ENCODE measurements at regions of chrX and their contacts with region 1.

Region 1: GRCh38 chrX:132219343-132219768 is at the start of gene RAP2C:
- DNase-seq: peak; percentile 77
- ATAC-seq: peak; percentile 75
- H3K4me3 ChIP-seq: peak within 1 kb of the TSS; percentile 76 to 81 (median 77)
- H3K27ac ChIP-seq: peak within 1 kb of the TSS; percentile 69
- H3K4me1 ChIP-seq: peaks cover 15% of the 10 kb centered on the region; the same call in 1 of the 2 replicates
- H3K27me3 ChIP-seq: no peaks in the 10 kb centered on the region; a peak in 1 of 5 replicates
- CTCF ChIP-seq: peak; percentile 85
- EP300 ChIP-seq: no peak
- POLR2A ChIP-seq: peak in 1 of 2 experiments; percentile 49; a peak in 1 of 4 replicates
- RAD21 ChIP-seq: no peak; the same call in 1 of the 2 replicates
- total RNA-seq, gene RAP2C: 28.5 and 39.3 TPM in 2 replicates

Region 2: GRCh38 chrX:131830400-131831184 is 388.8 kb before region 1 on chrX:
- CTCF ChIA-PET with region 1: no interaction called
- POLR2A ChIA-PET with region 1: interaction called, 4 read pairs
- in situ Hi-C with region 1: loop called (anchors 10 kb)
- intact Hi-C with region 1: no loop called
- DNase-seq: peak; percentile 92
- ATAC-seq: peak; percentile 99
- H3K4me3 ChIP-seq: peak overlapping the region; percentile 52 to 77 (median 64)
- H3K27ac ChIP-seq: peak overlapping the region; percentile 81
- H3K4me1 ChIP-seq: peaks cover 36% of the 10 kb centered on the region
- H3K27me3 ChIP-seq: no peaks in the 10 kb centered on the region
- CTCF ChIP-seq: peak; percentile 72
- EP300 ChIP-seq: 0 out of 4 replicates have a peak, but pooled peaks of 1 of the 2 experiments have one; percentile 6
- POLR2A ChIP-seq: peak; percentile 64 to 67; a peak in 3 of 4 replicates
- RAD21 ChIP-seq: peak; percentile 57; the same call in 1 of the 2 replicates

Region 3: GRCh38 chrX:131841496-131842410 is 377.6 kb before region 1 on chrX:
- CTCF ChIA-PET with region 1: no interaction called
- POLR2A ChIA-PET with region 1: no interaction called
- in situ Hi-C with region 1: loop called (anchors 10 kb)
- intact Hi-C with region 1: loop called (anchors 1 kb)
- DNase-seq: peak; percentile 50
- ATAC-seq: peak; percentile 94
- H3K4me3 ChIP-seq: peak overlapping the region in 1 of 3 experiments; percentile 44; a peak in 1 of 6 replicates
- H3K27ac ChIP-seq: no peak overlapping the region
- H3K4me1 ChIP-seq: 0 out of 2 replicates have a peak, but pooled peaks cover 10% of the 10 kb centered on the region
- H3K27me3 ChIP-seq: no peaks in the 10 kb centered on the region
- CTCF ChIP-seq: peak; percentile 84
- EP300 ChIP-seq: no peak
- POLR2A ChIP-seq: no peak
- RAD21 ChIP-seq: peak; percentile 56; the same call in 1 of the 2 replicates

Region 4: DNA sequence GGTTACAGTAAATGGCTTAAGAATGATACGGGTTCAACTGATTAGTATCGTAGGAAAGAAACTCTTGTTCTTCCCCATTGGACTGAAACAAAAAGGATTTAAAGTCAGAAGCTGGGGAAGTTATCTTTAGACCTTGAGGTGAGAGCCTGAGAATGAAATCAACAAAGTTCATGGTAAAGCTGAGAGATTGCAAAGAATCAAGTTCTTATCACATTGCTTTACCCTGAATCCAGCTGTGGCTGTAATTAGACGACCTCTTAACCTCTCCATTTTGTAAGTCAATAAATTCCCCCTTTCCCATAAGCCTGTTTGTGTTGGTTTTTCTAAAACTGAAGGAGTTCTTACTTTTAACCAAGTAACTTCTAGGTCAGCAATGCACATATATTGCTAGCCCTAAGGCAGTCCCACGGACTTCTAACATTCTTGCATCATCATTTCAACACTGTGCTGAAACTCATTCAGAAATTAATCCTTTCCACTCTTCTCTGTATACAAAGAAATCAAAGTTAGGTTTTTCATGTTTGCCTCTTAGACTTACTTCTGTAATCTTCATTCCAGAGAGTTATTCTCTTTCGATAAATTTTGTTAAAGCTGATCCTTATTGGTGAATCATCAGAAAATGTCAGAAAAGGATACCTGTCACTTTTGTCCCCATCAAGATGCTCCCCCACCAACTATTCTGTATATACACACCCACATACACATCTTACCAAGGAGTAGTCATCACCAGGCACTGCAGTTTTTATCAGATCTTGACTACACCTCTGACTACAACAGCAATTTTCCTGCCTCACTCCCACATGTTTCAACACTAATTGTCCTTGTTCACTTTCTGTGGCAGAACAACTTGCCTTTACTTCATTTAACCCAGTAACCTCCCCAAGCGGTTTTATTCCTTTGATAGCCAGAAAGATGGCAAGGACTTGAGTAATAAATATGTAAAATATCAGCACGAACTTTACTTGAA is 274.1 kb before region 1 on chrX:
- CTCF ChIA-PET with region 1: no interaction called
- POLR2A ChIA-PET with region 1: no interaction called
- in situ Hi-C with region 1: no loop called
- intact Hi-C with region 1: no loop called
- DNase-seq: no peak
- ATAC-seq: no peak
- H3K4me3 ChIP-seq: no peak overlapping the region
- H3K27ac ChIP-seq: no peak overlapping the region
- H3K4me1 ChIP-seq: no peaks in the 10 kb centered on the region
- H3K27me3 ChIP-seq: no peaks in the 10 kb centered on the region
- CTCF ChIP-seq: no peak
- EP300 ChIP-seq: no peak
- POLR2A ChIP-seq: no peak
- RAD21 ChIP-seq: no peak

Region 5: GRCh38 chrX:132022967-132023895 is 196.1 kb before region 1 on chrX and contains the start of gene STK26:
- CTCF ChIA-PET with region 1: no interaction called
- POLR2A ChIA-PET with region 1: no interaction called
- in situ Hi-C with region 1: no loop called
- intact Hi-C with region 1: loop called (anchors 10 kb)
- DNase-seq: peak; percentile 44
- ATAC-seq: peak; percentile 93
- H3K4me3 ChIP-seq: peak within 1 kb of the TSS; percentile 74 to 85 (median 81)
- H3K27ac ChIP-seq: peak within 1 kb of the TSS; percentile 78
- H3K4me1 ChIP-seq: peaks cover 28% of the 10 kb centered on the region
- H3K27me3 ChIP-seq: no peaks in the 10 kb centered on the region
- CTCF ChIP-seq: no peak
- EP300 ChIP-seq: no peak
- POLR2A ChIP-seq: peak; percentile 54 to 88
- RAD21 ChIP-seq: no peak
- total RNA-seq, gene STK26: 47.9 and 78.3 TPM in 2 replicates

Region 6: GRCh38 chrX:132041015-132041414 is 178.3 kb before region 1 on chrX:
- CTCF ChIA-PET with region 1: no interaction called
- POLR2A ChIA-PET with region 1: no interaction called
- in situ Hi-C with region 1: no loop called
- intact Hi-C with region 1: no loop called
- DNase-seq: no peak
- ATAC-seq: no peak
- H3K4me3 ChIP-seq: no peak overlapping the region
- H3K27ac ChIP-seq: no peak overlapping the region
- H3K4me1 ChIP-seq: peaks cover 12% of the 10 kb centered on the region
- H3K27me3 ChIP-seq: no peaks in the 10 kb centered on the region
- CTCF ChIP-seq: no peak
- EP300 ChIP-seq: no peak
- POLR2A ChIP-seq: no peak
- RAD21 ChIP-seq: no peak

Region 7: GRCh38 chrX:132077414-132077813 is 141.9 kb before region 1 on chrX:
- CTCF ChIA-PET with region 1: no interaction called
- POLR2A ChIA-PET with region 1: no interaction called
- in situ Hi-C with region 1: loop called (anchors 5 kb)
- intact Hi-C with region 1: loop called (anchors 5 kb)
- DNase-seq: peak; percentile 40
- ATAC-seq: peak; percentile 77
- H3K4me3 ChIP-seq: peak overlapping the region in 1 of 3 experiments; percentile 6; a peak in 2 of 6 replicates
- H3K27ac ChIP-seq: peak overlapping the region; percentile 71
- H3K4me1 ChIP-seq: peaks cover 36% of the 10 kb centered on the region
- H3K27me3 ChIP-seq: no peaks in the 10 kb centered on the region
- CTCF ChIP-seq: no peak
- EP300 ChIP-seq: no peak
- POLR2A ChIP-seq: no peak
- RAD21 ChIP-seq: no peak

Region 8: DNA sequence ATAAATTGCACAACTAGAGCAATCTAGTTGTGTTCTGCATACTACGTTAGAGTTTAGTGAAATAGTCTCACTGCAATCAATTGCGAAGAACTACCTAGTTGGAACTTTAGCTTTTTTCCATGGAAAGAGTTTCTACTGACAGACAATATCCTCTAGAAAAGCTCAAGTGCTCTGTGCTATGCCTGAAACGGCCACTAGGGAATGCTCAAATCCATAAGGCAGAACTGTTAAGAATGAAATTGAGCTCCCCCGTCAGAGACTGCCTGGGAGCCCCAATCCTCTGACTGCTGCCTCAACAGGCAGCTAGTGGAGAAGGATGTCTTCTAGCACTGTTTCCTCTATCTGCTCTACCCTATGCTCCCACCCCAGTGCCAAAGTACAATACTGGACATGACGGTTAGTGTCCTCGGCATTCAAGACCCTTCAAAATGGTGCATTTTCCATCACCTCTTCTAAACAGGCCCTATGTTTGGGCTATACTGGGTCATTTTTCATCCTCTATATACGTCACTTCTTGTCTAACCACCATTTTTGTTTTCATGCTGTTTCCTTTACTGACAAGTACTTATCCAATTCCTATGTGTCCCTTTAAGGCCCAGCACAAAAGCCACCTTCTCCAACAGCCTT is 126.8 kb before region 1 on chrX:
- CTCF ChIA-PET with region 1: interaction called, 6 read pairs
- POLR2A ChIA-PET with region 1: interaction called, 5 read pairs
- in situ Hi-C with region 1: no loop called
- intact Hi-C with region 1: loop called (anchors 2 kb)
- DNase-seq: peak; percentile 55
- ATAC-seq: peak; percentile 84
- H3K4me3 ChIP-seq: no peak overlapping the region
- H3K27ac ChIP-seq: no peak overlapping the region
- H3K4me1 ChIP-seq: peaks cover 9% of the 10 kb centered on the region; the same call in 1 of the 2 replicates
- H3K27me3 ChIP-seq: no peaks in the 10 kb centered on the region
- CTCF ChIP-seq: peak; percentile 67
- EP300 ChIP-seq: no peak
- POLR2A ChIP-seq: no peak
- RAD21 ChIP-seq: peak; percentile 27; the same call in 1 of the 2 replicates

Region 9: DNA sequence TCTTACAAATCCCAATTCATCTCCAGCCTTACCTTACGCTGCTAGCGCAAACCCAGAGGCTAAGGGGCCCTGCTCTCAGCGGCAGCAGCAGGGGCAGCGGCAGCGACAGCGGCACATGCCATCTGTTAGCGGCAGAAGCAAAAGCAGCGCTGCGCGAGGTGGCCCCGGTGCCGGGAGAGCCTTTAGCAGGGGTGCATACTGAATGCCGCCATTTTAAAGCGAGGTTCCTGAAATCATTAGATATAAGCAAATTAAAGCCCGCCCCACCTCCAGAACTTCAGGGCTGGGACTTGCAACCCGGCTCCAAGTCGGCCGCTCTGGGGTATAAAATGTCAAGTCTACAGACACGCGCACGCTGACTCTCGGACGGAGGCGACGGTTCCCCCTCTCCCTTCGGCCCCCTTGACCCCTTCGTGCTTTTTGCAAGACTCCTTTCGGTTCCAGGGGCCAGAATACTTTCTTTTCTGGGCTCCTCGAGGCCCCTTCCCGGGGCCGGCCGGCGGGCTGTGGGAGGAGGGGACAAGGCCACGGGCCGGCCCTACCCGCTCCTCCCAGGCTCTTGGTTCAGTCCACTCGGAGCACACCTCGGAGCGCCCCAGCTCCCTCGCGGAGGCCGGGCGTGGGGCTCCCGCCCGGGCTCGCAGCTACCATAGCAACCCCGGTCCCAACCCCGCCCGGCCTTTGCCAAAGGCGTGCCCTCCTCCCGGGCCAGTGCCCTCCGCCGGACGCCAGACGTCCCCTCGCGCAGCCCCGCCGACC is 269.6 kb after region 1 on chrX and contains the start of gene MBNL3:
- CTCF ChIA-PET with region 1: no interaction called
- POLR2A ChIA-PET with region 1: no interaction called
- in situ Hi-C with region 1: no loop called
- intact Hi-C with region 1: loop called (anchors 10 kb)
- DNase-seq: peak; percentile 33
- ATAC-seq: peak; percentile 63
- H3K4me3 ChIP-seq: peak within 1 kb of the TSS; percentile 64 to 73 (median 71)
- H3K27ac ChIP-seq: peak within 1 kb of the TSS; percentile 94
- H3K4me1 ChIP-seq: peaks cover 72% of the 10 kb centered on the region
- H3K27me3 ChIP-seq: no peaks in the 10 kb centered on the region
- CTCF ChIP-seq: no peak
- EP300 ChIP-seq: no peak
- POLR2A ChIP-seq: peak in 1 of 2 experiments; percentile 29; a peak in 2 of 4 replicates
- RAD21 ChIP-seq: no peak
- total RNA-seq, gene MBNL3: 155 and 367 TPM in 2 replicates